Heart right ventricle (tissue), 16 donors: ENCODE measurements at regions of chr22 and their contacts with region 1.

Region 1: GRCh38 chr22:31465307-31465706 is 24.3 kb downstream of the EIF4ENIF1 start:
- DNase-seq: no peak
- ATAC-seq: no peak
- H3K4me3 ChIP-seq: no peak overlapping the region
- H3K27ac ChIP-seq: no peak overlapping the region
- H3K4me1 ChIP-seq: no peaks in the 10 kb centered on the region
- H3K27me3 ChIP-seq: no peaks in the 10 kb centered on the region
- CTCF ChIP-seq: no peak

Region 2: DNA sequence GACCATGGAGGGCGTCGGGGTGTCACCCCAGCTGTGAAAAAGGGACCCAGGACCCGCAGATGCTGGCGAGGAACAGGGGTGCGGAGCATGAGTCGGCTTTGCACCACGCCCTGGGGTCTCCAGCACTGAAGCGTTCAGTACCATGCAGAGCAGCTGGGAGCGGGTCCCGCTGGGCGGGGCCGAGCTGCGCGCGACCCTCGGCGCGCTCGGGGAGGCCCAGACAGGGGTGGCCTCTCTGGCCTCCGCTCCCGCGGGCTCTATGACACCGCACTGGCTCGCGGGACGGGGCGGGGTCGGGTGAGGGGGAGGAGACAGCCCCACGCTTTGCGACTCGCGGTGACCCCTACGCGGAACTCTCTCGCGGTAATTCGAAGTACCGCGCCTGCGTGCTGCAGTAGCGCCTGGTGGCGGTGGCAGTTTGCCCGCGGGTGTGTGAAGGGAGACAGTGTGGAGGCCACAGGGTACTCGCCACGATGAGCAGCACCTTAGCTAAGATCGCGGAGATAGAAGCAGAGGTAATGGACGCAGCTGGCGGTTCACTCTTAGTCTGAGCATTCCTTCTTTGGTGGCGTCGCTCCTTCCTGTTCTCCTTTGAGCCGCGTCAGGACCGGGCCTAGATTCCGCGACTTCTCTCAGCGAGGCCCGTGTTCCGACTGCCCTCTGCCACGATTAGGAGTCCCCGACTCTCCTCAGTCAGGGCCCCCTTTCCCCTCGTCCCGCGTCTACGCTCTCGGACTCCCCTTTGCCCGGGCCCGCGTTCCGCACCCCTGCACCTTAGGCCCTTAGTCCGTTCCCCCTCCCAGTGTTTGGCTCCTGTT is 65.9 kb before region 1 on chr22 and contains the start of gene DRG1:
- intact Hi-C with region 1: loop called in 1 of 10 experiments (anchors 10 kb)
- DNase-seq: peak; percentile 98 to 99
- ATAC-seq: peak; percentile 99 to 100 (median 100)
- H3K4me3 ChIP-seq: peak within 1 kb of the TSS; percentile 70 to 100 (median 84)
- H3K27ac ChIP-seq: peak within 1 kb of the TSS; percentile 71 to 94 (median 88)
- H3K4me1 ChIP-seq: peaks cover 0 to 26% (median 18%) of the 10 kb centered on the region in 9 donors
- H3K27me3 ChIP-seq: no peaks in the 10 kb centered on the region
- CTCF ChIP-seq: peak in 2 of 9 donors; percentile 12 to 15
- total RNA-seq, gene DRG1: 50.4 to 76.7 (median 60.2) TPM

Region 3: DNA sequence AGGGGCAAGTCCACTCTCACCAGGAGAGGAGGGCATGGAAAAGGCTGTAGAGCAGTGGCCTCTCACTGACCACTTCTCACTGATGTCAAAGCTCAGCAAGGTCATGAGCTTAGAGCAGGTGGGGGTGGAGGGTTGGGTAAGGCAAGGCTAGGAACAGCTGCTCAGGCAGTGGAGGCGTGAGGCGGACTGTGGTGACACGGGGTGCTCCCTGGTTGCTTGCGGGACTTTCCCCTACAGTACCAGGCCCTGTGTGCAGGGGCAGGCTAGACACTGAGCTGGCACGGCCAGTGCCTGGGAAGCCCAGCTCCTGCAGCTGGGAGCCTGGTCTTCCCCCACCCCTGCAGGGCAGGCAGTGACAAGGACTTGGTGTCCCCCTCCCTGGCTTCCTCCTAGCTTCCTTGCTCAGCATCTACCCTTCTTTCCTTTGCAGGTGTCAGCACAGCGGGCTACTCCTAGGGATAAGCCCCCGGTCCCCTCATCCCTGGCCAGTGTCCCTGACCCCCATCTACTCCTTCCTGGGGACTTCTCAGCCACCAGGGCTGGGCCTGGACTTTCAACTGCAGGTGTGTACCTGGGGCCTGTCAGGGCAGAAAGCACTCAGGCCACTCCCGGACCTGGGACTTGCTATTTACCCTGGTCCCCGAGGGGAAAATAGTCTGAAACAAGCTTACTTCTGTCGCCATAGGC is 151.2 kb after region 1 on chr22:
- intact Hi-C with region 1: no loop called
- DNase-seq: no peak
- ATAC-seq: peak in 4 of 8 donors; percentile 2 to 12 (median 4)
- H3K4me3 ChIP-seq: no peak overlapping the region
- H3K27ac ChIP-seq: peak overlapping the region in 4 of 10 donors; percentile 9 to 65 (median 41)
- H3K4me1 ChIP-seq: peaks cover 5 to 36% (median 28%) of the 10 kb centered on the region in 9 donors
- H3K27me3 ChIP-seq: no peaks in the 10 kb centered on the region
- CTCF ChIP-seq: no peak